CD8-positive, alpha-beta T cell (primary cell): ENCODE measurements at regions of chr7 and their contacts with region 1.

Region 1: GRCh38 chr7:29071203-29071874 is 75.0 kb downstream of the CPVL start:
- DNase-seq: no peak
- ATAC-seq: no peak
- H3K4me3 ChIP-seq: no peak overlapping the region
- H3K4me3 Mint-ChIP-seq: no peak overlapping the region
- H3K27ac ChIP-seq: no peak overlapping the region
- H3K27ac Mint-ChIP-seq: no peak overlapping the region
- H3K4me1 ChIP-seq: no peaks in the 10 kb centered on the region
- H3K4me1 Mint-ChIP-seq: no peaks in the 10 kb centered on the region
- H3K27me3 ChIP-seq: no peaks in the 10 kb centered on the region
- H3K27me3 Mint-ChIP-seq: no peaks in the 10 kb centered on the region
- CTCF ChIP-seq: no peak

Region 2: DNA sequence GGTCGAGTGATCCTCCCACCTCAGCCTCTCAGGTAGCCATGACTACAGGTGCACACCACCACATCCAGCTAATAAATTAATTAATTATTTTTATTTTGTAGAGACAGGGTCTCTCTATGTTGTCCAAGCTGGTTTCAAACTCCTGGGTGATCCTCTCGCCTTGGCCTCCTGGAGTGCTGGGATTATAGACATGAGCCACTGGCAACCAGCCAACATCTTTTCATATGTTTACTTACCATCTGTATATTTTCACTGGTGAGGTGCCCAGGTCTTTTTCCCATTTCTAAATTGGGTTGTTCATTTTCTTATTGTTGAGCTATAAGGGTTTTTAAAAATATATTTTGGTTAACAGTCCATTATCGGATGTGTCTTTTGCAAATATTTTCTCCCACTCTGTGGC is 14.3 kb before region 1 on chr7:
- CTCF ChIA-PET with region 1: no interaction called
- POLR2A ChIA-PET with region 1: no interaction called
- intact Hi-C with region 1: loop called in 1 of 2 experiments (anchors 1 kb)
- DNase-seq: no peak
- ATAC-seq: no peak
- H3K4me3 ChIP-seq: no peak overlapping the region
- H3K4me3 Mint-ChIP-seq: no peak overlapping the region
- H3K27ac ChIP-seq: no peak overlapping the region
- H3K27ac Mint-ChIP-seq: no peak overlapping the region
- H3K4me1 ChIP-seq: no peaks in the 10 kb centered on the region
- H3K4me1 Mint-ChIP-seq: no peaks in the 10 kb centered on the region
- H3K27me3 ChIP-seq: no peaks in the 10 kb centered on the region
- H3K27me3 Mint-ChIP-seq: peaks cover 2% of the 10 kb centered on the region
- CTCF ChIP-seq: no peak

Region 3: DNA sequence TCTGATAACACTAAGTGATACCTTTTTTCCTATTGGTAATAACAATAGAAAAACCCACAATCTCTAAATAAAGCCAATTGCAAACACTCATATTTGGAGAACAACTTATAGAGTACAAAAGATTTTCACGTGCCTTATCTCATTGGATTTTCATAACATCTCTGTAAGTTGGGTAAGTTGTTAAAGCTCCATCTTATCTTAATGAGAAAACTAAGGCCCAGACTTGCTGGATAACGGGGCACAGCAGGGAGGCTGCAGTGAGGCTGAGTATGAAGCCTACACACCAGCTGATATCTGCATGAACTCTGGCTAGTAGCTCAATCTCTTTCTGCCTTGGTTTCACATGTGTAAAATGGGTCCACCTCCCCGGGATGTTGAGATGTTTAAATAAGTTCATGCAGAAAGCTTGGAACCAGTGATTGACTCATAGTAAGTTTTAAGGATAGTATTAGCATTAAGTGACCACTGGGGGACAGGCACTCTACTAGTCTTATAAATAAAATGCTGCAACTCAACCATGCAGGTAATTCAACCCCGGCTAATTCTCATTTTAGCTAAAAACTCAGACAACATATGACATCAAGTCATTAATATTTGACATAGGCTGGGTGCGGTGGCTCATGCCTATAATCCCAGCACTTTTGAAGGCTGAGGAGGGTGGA is 48.3 kb after region 1 on chr7:
- CTCF ChIA-PET with region 1: no interaction called
- POLR2A ChIA-PET with region 1: no interaction called
- intact Hi-C with region 1: no loop called
- DNase-seq: no peak
- ATAC-seq: no peak
- H3K4me3 ChIP-seq: no peak overlapping the region
- H3K4me3 Mint-ChIP-seq: no peak overlapping the region
- H3K27ac ChIP-seq: no peak overlapping the region
- H3K27ac Mint-ChIP-seq: no peak overlapping the region
- H3K4me1 ChIP-seq: no peaks in the 10 kb centered on the region
- H3K4me1 Mint-ChIP-seq: no peaks in the 10 kb centered on the region
- H3K27me3 ChIP-seq: no peaks in the 10 kb centered on the region
- H3K27me3 Mint-ChIP-seq: peaks cover 4% of the 10 kb centered on the region
- CTCF ChIP-seq: no peak